Thyroid gland (tissue), 4 donors: ENCODE measurements at regions of chr22 and their contacts with region 1.

Region 1: DNA sequence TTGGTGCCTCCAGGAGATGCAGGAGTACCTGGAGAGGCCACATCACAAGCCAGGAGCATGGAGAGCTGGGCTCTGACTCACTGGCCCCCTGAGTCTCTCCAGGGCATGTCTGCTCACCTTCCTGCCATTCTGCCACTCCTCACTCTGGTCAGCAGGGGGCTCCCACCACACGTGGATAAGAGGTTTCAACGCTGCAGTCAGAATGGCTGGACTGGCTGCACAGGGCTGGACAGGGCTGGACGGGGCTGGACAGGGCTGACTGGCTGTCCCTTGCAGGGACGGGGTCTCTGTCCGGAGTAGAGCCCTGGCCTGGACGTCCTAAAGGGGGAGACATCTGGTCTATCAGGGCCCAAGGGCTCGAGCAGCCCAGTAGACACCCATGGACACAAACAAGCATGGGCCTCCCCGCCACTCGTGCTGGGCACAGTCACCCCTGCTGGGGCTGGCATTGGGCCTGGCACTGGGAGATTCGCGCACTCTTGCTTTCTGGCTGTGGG is 34.6 kb downstream of the CYTH4 start:
- DNase-seq: peak; percentile 66 to 75
- H3K4me3 ChIP-seq: no peak overlapping the region
- H3K27ac ChIP-seq: no peak overlapping the region
- H3K4me1 ChIP-seq: no peaks in the 10 kb centered on the region
- H3K27me3 ChIP-seq: no peaks in the 10 kb centered on the region
- CTCF ChIP-seq: peak in 5 of 6 experiments; percentile 40 to 86 (median 80)
- POLR2A ChIP-seq: no peak

Region 2: DNA sequence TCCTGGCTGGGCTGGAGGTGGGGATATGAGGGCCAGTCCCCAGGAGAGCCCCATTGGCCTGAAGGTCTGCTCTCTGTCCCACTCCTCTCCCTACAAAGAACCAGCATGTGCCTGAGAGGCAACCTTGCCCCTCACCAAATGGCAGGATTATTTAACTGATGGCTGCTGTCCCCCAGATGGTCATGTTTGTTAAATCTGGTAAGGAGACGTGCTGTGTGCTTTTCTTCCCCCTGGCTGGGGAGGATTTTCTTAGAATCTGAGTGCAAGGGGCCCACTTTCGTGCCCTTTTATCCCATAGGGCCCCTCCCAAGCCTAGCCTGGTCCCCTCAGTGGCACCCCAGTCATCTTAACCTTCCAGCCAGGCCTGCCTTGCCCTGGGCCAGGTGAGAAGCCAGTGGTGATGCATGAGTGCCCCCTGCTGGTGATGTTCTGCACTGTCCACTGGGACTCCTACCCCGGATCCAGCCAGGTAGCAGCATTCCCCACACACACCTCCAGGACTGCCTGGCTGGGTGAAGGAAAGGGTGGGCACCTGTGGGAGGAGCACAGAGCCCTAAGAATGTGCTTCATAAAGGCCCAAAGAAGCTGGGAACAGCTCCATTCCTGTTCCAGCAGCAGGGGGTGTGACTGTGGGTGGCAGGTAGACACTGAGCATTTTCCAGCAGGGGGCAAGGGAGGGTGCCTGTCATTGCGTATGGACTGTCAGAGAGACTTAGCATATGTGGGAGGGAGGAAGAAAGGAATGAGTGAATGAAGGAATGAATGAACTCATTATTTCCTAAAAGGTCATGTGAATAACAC is 140.4 kb after region 1 on chr22:
- intact Hi-C with region 1: loop called (anchors 5 kb)
- DNase-seq: peak; percentile 49 to 60
- H3K4me3 ChIP-seq: no peak overlapping the region
- H3K27ac ChIP-seq: no peak overlapping the region
- H3K4me1 ChIP-seq: peaks cover 5 to 8% of the 10 kb centered on the region in 2 donors
- H3K27me3 ChIP-seq: no peaks in the 10 kb centered on the region
- CTCF ChIP-seq: peak in 5 of 6 experiments; percentile 41 to 69 (median 53)
- POLR2A ChIP-seq: no peak